Calu3 (cell line): ENCODE measurements at regions of chr5 and their contacts with region 1.

Region 1: DNA sequence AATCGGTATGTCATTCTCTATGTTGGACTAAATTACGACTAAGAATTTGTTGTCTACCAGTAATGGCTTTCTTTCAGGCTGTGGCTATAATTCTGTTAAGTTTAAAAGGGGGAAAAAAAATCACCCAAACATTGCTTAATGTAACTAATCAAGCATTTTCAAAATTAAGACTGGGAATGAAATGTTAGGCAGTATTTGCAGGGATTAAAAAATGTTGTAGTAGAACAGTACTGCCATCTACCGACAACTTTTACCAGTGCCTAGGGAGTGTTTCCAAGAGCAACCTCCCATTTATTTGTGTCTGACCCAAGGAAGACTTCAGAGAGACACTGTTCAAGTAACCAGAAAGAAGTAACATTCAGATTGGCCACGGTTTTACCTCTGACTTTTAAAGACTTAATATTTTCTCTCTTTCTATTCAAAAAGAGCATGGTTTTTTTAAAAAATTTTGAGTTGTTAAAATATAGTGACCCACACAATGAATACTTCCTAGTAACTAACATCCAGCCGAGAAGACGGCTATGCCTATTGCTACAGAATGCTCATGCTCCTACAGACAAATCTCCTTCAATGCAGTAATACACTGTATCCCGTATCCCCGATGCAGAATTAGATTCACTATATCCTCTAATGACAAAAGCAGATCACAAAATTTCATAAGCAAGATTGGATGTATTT is 92.4 kb downstream of the ARL15 start:
- DNase-seq: peak; percentile 54
- H3K4me3 Mint-ChIP-seq: no peak overlapping the region
- H3K27ac Mint-ChIP-seq: no peak overlapping the region
- H3K4me1 Mint-ChIP-seq: no peaks in the 10 kb centered on the region
- H3K27me3 Mint-ChIP-seq: no peaks in the 10 kb centered on the region
- CTCF ChIP-seq: peak; percentile 38

Region 2: DNA sequence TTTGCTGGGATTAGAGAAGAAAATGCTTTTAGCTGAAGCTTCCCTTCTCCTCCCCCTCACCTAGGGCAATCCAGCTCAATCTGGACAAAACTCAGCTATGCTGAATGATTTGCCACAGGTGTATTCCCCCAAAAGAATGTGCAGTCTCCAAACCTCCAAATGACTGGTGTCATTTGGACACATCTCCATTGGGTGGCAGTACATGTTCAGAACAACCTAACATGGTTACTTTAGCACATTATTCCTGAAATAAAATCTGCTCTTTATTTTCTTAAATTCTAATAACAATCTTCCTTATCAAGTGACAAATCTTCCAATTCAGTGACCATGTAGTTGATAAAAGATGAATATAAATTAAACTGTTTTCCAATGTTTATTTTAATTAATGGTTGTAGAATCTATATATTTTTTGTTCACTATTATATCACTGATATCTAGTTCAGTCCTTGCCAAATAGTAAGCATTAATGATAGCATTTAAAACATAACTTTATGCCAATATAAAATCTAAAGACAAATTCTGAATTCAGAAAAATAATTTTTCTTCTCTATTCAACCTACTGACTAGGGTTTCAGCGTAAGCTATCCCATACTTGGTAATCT is 1047.1 kb before region 1 on chr5:
- CTCF ChIA-PET with region 1: no interaction called
- intact Hi-C with region 1: loop called (anchors 5 kb)
- DNase-seq: peak; percentile 35
- H3K4me3 Mint-ChIP-seq: no peak overlapping the region
- H3K27ac Mint-ChIP-seq: no peak overlapping the region
- H3K4me1 Mint-ChIP-seq: no peaks in the 10 kb centered on the region
- H3K27me3 Mint-ChIP-seq: no peaks in the 10 kb centered on the region
- CTCF ChIP-seq: peak; percentile 50

Region 3: GRCh38 chr5:53478411-53479044 is 739.4 kb before region 1 on chr5:
- CTCF ChIA-PET with region 1: interaction called, 4 read pairs
- intact Hi-C with region 1: loop called (anchors 2 kb)
- DNase-seq: peak; percentile 47
- H3K4me3 Mint-ChIP-seq: peak overlapping the region; percentile 78
- H3K27ac Mint-ChIP-seq: peak overlapping the region; percentile 55
- H3K4me1 Mint-ChIP-seq: peaks cover 15% of the 10 kb centered on the region
- H3K27me3 Mint-ChIP-seq: no peaks in the 10 kb centered on the region
- CTCF ChIP-seq: peak; percentile 60

Region 4: GRCh38 chr5:53874409-53874808 is 343.6 kb before region 1 on chr5:
- CTCF ChIA-PET with region 1: no interaction called
- intact Hi-C with region 1: loop called (anchors 2 kb)
- DNase-seq: peak; percentile 9
- H3K4me3 Mint-ChIP-seq: no peak overlapping the region
- H3K27ac Mint-ChIP-seq: no peak overlapping the region
- H3K4me1 Mint-ChIP-seq: no peaks in the 10 kb centered on the region
- H3K27me3 Mint-ChIP-seq: no peaks in the 10 kb centered on the region
- CTCF ChIP-seq: no peak

Region 5: DNA sequence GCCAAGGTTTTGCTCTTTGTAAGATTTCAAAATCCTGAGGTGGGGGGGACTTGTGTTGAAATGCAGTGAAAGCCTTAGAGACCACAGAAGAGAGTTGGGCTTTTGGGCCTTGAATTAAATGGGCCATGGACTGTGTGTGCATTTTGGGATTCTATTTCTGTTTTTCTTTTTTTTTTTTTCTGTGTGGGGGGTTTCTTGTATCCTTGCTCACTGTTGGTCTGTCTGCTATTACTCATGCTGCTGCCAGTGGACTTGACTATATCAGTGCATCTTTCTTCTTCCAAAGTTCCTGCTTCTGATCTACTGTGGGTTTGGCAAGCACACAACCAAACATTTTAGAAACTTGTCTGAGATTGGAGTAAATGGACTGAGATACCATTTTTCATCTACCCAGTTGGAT is 252.5 kb before region 1 on chr5:
- CTCF ChIA-PET with region 1: no interaction called
- intact Hi-C with region 1: loop called (anchors 2 kb)
- DNase-seq: no peak
- H3K4me3 Mint-ChIP-seq: no peak overlapping the region
- H3K27ac Mint-ChIP-seq: no peak overlapping the region
- H3K4me1 Mint-ChIP-seq: no peaks in the 10 kb centered on the region
- H3K27me3 Mint-ChIP-seq: no peaks in the 10 kb centered on the region
- CTCF ChIP-seq: no peak